Activated CD4-positive, alpha-beta T cell treated with anti-CD3 and anti-CD28 coated beads for 36 hours (primary cell): ENCODE measurements at regions of chr2 and their contacts with region 1.

Region 1: DNA sequence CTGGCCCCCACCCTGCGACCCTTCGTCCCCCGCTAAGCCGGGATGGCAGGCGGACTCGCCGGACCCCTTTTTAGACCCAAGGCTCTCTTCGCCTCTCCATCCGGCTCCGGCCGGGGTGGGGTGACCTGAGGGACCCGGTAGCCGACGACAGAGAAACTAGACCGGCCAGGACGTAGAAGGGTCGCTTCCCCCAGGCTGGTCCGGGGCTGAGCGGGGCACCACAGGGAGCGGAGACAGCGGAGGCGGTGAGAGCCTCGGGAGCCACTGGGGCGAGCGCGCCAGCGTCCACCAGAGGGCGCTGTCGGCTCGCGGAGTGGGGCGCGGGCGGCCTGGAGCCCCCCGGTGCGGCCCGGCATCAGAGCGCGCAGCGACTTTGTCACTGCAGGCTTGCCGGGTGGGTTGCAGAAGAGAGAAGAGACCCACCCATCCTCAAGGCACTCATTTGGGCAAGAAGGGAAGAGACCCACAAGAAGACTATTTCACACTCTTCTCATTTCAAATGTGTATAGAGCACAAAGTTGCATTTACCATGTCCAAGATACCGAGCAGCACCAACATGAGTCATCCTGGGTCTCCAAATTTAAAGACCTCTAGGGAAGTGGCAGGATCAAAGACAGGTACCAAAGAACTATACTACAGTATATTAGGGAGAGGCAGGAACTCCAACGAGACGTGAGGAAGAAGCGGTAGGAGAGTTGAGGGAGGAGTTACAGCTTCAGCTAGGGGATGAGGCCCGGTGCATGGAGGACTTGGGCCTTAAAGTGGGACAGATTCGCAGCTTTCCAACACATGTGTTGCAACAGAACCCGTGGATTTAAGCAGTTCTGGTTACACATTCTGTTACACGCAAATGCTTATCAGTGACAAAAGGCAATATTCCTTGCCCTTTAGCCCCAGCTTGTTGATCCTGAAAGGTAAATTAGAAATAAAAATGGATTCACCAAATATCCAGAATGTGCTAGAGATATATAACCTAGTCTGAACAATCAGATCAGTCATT is 7.6 kb upstream of the PRKCE start:
- DNase-seq: peak; percentile 84
- ATAC-seq: peak; percentile 99
- H3K4me3 Mint-ChIP-seq: peak overlapping the region; percentile 32
- H3K27ac Mint-ChIP-seq: no peak overlapping the region
- H3K4me1 Mint-ChIP-seq: peaks cover 3% of the 10 kb centered on the region
- H3K27me3 Mint-ChIP-seq: peaks cover 20% of the 10 kb centered on the region

Region 2: DNA sequence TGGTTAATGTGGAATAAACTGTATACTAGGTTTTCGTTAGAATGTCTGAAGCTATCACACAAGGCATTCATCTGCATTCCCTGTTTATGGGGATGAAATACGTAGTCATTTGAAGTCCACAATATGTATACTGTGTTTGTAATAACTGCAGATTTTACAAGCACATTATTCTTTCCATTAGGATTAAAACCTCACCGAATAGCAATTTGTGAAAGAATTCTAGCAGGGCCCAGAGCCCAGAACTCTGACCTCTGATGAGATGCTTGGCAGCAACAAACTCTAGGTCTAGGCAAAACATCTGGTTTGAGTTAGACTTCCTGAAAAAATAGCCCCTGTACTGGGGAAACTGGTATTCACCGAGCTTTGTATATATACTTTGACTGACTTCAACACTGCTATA is 191.0 kb before region 1 on chr2:
- CTCF ChIA-PET with region 1: no interaction called
- POLR2A ChIA-PET with region 1: no interaction called
- intact Hi-C with region 1: no loop called
- DNase-seq: no peak
- ATAC-seq: no peak
- H3K4me3 Mint-ChIP-seq: no peak overlapping the region
- H3K27ac Mint-ChIP-seq: no peak overlapping the region
- H3K4me1 Mint-ChIP-seq: no peaks in the 10 kb centered on the region
- H3K27me3 Mint-ChIP-seq: no peaks in the 10 kb centered on the region

Region 3: DNA sequence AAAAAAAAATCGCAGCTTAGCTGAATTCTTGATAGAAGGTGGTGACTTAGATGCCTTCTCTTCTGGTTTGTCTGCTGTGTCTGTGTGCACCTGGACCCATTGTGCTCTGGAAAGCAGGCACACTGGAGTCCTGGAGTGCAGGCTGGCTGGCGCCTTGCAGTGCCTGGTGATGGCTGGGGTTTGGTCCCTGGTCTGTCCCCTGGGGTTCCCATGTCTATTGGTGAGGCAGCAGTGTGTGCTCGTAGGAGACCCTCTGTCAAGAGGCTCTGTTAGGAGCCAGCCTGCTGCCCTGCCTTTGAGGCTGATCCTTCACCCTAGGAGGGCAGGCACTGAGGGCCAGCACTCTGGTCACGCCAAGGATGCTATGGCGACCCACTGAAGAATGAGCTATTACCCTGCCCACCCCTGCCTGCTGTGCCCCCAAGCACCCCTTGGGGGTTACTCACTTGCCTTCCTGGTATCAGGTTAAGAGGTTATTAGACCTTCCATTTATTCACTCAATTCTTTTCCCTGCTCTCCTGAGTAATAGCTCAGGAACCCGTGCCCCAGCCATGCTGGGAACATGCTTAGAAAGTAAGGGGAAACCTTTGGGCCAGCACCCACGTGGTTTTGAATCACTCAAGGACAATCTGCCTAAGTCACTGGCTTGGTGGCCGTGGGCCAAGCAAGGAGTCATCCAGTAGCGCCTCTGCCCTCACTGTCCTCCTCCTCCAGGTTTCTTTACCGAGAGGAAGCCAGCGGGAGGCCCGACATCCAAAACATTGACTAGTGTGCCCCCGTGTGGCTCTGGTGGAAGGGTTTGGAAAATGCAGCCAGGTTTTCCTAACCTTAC is 292.2 kb after region 1 on chr2:
- CTCF ChIA-PET with region 1: interaction called, 6 read pairs
- POLR2A ChIA-PET with region 1: no interaction called
- intact Hi-C with region 1: loop called (anchors 1 kb)
- DNase-seq: peak; percentile 75
- ATAC-seq: peak; percentile 85
- H3K4me3 Mint-ChIP-seq: no peak overlapping the region
- H3K27ac Mint-ChIP-seq: no peak overlapping the region
- H3K4me1 Mint-ChIP-seq: peaks cover 4% of the 10 kb centered on the region
- H3K27me3 Mint-ChIP-seq: no peaks in the 10 kb centered on the region

Region 4: GRCh38 chr2:45993476-45993991 is 349.7 kb after region 1 on chr2:
- CTCF ChIA-PET with region 1: no interaction called
- POLR2A ChIA-PET with region 1: no interaction called
- intact Hi-C with region 1: loop called in 1 of 2 experiments (anchors 5 kb)
- DNase-seq: peak; percentile 76
- ATAC-seq: peak; percentile 85
- H3K4me3 Mint-ChIP-seq: no peak overlapping the region
- H3K27ac Mint-ChIP-seq: no peak overlapping the region
- H3K4me1 Mint-ChIP-seq: peaks cover 8% of the 10 kb centered on the region
- H3K27me3 Mint-ChIP-seq: no peaks in the 10 kb centered on the region